Activated CD8-positive, alpha-beta T cell treated with anti-CD3 and anti-CD28 coated beads for 36 hours (primary cell): ENCODE measurements at regions of chr14 and their contacts with region 1.

Region 1: DNA sequence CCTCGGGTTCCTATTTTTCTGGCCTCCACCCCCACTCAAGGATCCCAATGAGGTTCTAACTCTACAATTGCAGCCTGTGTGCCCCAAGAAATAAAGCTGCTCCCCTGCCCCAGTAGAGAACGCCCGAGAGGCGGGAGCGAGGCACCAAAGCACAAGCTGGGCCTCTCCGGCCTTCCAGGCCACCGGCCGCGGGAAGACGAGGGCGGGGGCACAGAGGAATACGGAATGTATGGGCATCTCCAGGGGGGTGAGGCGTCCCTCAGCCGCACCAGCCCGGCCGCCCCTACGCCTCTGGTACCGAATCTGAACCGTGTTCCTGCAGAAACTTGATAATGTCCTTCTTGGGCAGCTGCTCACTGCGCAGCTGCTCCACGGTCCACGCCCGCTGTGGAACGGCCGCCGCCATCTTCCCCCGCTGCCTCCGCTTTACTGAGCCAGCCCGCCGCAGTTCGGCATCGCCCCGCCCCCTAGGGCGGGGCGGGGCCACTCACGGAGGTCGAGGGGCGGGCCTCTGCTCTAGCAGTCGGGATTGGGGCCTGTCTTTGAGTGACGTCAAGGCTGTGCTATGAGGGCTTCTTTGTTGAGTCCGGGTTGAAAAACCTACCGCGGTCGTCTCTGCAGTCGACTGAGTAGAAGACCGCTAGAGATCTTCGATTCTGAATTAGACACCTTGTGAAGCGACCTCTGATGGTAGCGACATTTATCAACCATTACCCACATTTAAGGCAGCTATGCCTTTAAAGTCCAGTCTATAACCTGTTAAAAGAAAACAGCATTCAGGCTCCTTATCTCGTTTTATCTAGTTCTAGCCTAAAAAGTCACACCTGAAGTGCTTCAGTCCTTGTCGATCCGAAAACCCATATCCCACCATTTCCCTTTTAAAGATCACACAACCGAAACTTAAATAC is at the start of gene FKBP3:
- DNase-seq: peak; percentile 97
- ATAC-seq: peak; percentile 95
- H3K4me3 Mint-ChIP-seq: peak within 1 kb of the TSS; percentile 99
- H3K27ac Mint-ChIP-seq: peak within 1 kb of the TSS; percentile 98
- H3K4me1 Mint-ChIP-seq: peaks cover 28% of the 10 kb centered on the region
- H3K27me3 Mint-ChIP-seq: no peaks in the 10 kb centered on the region
- CTCF ChIP-seq: no peak
- total RNA-seq, gene FKBP3: 65.6 to 66.4 TPM

Region 2: GRCh38 chr14:45089813-45090212 is 44.5 kb before region 1 on chr14:
- CTCF ChIA-PET with region 1: no interaction called
- POLR2A ChIA-PET with region 1: interaction called, 8 read pairs
- intact Hi-C with region 1: loop called (anchors 2 kb)
- DNase-seq: peak; percentile 27
- ATAC-seq: peak; percentile 98
- H3K4me3 Mint-ChIP-seq: peak overlapping the region; percentile 24
- H3K27ac Mint-ChIP-seq: peak overlapping the region; percentile 89
- H3K4me1 Mint-ChIP-seq: peaks cover 74% of the 10 kb centered on the region
- H3K27me3 Mint-ChIP-seq: no peaks in the 10 kb centered on the region
- CTCF ChIP-seq: no peak

Region 3: GRCh38 chr14:45253068-45253753 is 118.9 kb after region 1 on chr14 and contains the start of gene MIS18BP1:
- CTCF ChIA-PET with region 1: no interaction called
- POLR2A ChIA-PET with region 1: interaction called, 3 read pairs
- intact Hi-C with region 1: loop called (anchors 5 kb)
- DNase-seq: peak; percentile 97
- ATAC-seq: peak; percentile 93
- H3K4me3 Mint-ChIP-seq: peak within 1 kb of the TSS; percentile 91
- H3K27ac Mint-ChIP-seq: peak within 1 kb of the TSS; percentile 96
- H3K4me1 Mint-ChIP-seq: peaks cover 24% of the 10 kb centered on the region
- H3K27me3 Mint-ChIP-seq: no peaks in the 10 kb centered on the region
- CTCF ChIP-seq: peak; percentile 76
- total RNA-seq, gene MIS18BP1: 51.0 to 55.8 TPM